ENCODE measurements at regions of chr6 and their contacts with region 1.

Region 1: DNA sequence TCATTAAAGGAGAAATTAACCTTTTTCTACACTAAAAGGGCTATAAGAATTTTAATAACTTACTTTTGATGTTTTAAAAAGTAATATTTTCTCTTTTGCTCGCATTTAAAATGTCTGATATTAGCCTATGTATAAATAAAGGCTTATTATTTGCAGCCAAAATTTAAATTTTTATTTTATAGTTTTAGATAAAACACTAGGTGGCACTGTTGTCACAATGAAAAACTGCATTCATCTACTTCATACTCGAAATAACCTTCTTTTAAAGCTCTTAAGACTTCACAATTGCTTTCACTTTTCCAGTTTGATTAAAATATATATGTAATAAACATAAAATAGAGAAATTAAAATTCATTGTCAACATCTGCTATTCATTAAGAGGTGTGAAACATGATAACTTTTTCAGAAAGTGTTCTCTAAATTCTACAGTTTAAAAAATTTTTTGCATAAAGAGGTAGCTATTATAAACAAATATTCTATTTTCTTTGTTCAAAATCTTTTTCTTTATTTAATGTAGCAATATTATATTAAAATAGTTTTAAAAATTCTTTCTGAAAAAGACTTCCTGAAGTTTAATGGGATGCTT is 78.8 kb upstream of the DEFB112 start:
- DNase-seq: no peak
- ATAC-seq: no peak

Region 2: DNA sequence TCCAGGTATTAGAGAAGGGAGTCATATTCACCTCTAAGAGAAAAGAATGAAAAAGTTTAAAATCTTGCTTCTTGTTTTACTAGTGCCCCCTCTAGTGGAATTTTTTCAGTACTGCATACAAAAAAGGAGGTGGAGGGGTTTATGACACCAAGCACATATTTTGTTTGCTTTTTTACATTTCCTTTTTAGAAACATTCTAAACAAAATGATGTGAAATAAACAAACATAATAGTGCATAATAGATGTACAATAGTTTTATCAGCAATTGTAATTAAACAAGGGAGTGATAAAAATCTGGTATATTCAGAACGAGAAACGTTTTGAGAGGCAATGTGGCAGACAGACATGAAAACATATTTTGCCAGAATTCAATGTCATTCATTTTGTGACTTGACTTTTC is 473.8 kb after region 1 on chr6:
- intact Hi-C with region 1: loop called in 1 of 2 experiments (anchors 5 kb)
- DNase-seq: no peak
- ATAC-seq: no peak

Region 3: DNA sequence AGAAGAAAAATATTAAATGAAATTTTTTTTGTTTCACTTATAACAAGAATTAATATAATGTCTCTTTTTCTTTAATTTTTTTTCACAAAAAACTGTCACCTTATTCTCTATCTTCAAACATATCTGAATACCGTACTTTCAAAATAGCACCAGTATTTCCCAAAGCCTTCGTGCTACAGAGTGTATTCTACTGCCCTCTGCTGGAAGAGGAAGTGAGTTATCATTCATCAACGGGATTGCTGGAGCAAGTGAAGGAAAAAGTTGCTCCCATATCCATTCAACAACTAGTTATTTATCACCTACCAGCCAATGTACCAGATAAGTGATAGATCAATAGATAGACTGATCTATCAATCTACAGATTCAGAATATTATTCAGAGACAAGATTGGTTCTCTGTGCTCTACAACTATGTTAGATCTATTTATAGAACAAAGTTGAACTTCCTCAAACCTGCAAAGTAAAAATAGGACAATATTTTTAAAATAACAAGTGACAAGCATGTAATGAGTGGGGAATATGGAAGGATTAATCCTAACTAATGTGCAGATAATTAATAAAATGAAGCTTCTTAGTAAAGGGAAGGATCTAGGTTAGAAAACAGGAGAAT is 663.5 kb after region 1 on chr6:
- intact Hi-C with region 1: loop called in 1 of 2 experiments (anchors 10 kb)
- DNase-seq: no peak
- ATAC-seq: peak; percentile 42

Measured in left colon (tissue), 2 donors.